Left ventricle myocardium superior (tissue), 1 donor: ENCODE measurements at regions of chr3 and their contacts with region 1.

Region 1: DNA sequence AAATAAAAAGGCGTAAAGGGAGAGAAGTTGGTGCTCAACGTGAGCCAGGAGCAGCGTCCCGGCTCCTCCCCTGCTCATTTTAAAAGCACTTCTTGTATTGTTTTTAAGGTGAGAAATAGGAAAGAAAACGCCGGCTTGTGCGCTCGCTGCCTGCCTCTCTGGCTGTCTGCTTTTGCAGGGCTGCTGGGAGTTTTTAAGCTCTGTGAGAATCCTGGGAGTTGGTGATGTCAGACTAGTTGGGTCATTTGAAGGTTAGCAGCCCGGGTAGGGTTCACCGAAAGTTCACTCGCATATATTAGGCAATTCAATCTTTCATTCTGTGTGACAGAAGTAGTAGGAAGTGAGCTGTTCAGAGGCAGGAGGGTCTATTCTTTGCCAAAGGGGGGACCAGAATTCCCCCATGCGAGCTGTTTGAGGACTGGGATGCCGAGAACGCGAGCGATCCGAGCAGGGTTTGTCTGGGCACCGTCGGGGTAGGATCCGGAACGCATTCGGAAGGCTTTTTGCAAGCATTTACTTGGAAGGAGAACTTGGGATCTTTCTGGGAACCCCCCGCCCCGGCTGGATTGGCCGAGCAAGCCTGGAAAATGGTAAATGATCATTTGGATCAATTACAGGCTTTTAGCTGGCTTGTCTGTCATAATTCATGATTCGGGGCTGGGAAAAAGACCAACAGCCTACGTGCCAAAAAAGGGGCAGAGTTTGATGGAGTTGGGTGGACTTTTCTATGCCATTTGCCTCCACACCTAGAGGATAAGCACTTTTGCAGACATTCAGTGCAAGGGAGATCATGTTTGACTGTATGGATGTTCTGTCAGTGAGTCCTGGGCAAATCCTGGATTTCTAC is at the start of gene RARB:
- DNase-seq: peak; percentile 73
- ATAC-seq: peak; percentile 92
- total RNA-seq, gene RARB: 22.8 TPM

Region 2: GRCh38 chr3:24793896-24794295 is 634.3 kb before region 1 on chr3:
- intact Hi-C with region 1: no loop called
- DNase-seq: no peak
- ATAC-seq: no peak

Region 3: GRCh38 chr3:25033407-25034029 is 394.6 kb before region 1 on chr3:
- intact Hi-C with region 1: loop called (anchors 10 kb)
- DNase-seq: peak; percentile 47
- ATAC-seq: peak; percentile 85

Region 4: DNA sequence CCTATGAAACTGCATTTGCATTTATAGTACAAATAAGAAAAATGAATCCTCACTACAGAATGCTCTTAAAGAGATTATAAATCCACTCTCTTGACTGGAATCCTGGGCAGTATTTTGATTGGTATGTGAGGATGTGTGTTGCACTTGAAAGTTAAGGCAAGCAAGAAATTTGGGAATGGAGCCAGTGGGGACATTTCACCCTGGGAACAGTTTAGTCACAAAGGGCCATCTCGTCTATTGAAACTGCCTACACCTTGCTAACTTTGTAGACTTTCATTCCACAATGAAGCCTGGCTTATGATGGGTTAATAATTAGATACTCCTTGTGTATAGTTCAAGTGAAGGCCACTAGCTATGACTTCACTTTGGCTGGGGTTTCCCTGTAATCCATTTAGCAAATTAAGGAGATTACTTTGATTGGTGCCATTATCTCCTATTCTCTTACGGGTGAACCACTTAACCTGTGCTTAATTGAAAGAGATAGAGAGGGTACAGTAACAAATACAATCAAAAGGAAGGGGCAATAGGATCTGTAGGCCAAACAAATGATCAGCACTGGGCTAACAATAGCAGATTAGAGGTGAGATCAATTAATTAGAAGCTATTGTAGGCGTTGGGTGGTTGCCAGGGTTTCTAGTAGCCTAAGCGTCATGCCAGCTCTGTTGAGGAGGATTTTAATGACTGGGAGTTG is 147.0 kb before region 1 on chr3:
- intact Hi-C with region 1: no loop called
- DNase-seq: no peak
- ATAC-seq: no peak

Region 5: DNA sequence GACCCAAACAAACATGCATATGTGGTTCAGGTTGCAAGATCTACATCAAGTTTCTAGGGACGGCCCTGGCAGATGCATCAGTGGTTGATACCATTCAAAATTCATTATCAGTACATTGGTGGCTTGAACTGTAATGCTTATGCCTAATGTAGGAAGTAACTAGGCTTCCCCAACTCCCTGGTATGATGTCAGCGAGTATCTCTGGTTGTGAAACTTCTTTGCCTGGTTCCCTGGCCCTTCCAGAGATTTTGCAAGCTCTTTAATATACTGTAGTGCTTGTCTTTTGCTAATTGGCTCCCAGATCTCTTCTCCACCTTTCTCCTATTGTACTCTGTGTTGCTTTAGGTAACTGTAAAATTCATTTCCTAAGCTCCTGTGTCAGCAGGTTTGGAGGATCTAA is 114.9 kb before region 1 on chr3:
- intact Hi-C with region 1: no loop called
- DNase-seq: no peak
- ATAC-seq: no peak

Region 6: DNA sequence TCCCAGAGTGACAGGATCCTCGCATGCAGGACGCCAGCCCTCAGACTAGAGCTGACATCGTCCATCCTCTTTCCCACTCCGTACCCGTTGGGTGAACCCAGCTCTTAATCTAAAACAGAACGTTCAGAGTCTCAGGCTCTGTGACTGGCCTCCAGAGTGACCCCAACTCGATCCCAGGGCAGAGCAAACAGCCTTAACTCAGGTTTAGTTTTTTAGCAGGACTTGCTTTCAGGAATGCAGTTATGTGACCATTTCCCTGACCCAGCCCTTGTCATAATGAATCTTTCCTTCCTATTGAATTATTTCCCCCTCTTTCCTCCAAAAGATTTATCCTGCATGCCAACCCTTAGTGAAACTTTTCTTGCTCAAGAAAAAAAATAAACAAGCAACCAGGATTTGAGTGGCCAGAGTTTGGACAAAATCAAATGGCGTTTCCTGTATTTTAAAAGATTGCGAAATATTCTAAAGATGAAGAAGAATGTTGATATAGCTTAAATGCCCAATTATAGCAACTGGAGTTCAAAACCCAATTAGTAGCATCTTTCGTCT is 47.9 kb before region 1 on chr3:
- intact Hi-C with region 1: no loop called
- DNase-seq: no peak
- ATAC-seq: no peak